Body of pancreas (tissue), 4 donors: ENCODE measurements at regions of chr9 and their contacts with region 1.

Region 1: DNA sequence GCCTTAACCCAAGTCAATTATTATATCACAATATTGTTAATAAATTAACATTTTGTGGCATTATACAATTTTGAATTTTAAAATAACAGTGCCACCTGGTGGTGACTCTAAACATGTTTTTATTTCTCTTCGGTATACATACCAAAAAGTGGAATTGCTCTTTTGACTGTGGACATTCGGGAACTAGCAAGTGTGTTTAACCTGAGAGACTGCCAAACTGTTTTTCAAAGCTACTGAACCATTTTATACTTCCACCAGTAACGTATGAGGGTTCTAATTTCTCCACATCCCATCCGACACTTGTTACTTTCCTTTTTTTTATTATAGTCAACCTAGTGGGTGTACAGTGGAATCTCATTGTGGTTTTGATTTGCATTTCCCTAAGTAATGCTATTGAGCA is 18.3 kb upstream of the HSDL2 start:
- DNase-seq: no peak
- ATAC-seq: peak; percentile 62
- H3K4me3 ChIP-seq: no peak overlapping the region
- H3K27ac ChIP-seq: no peak overlapping the region
- H3K4me1 ChIP-seq: peaks cover 4% of the 10 kb centered on the region
- H3K27me3 ChIP-seq: no peaks in the 10 kb centered on the region
- CTCF ChIP-seq: peak; percentile 19 to 67 (median 58)
- POLR2A ChIP-seq: no peak

Region 2: GRCh38 chr9:112112941-112113681 is 248.5 kb before region 1 on chr9:
- intact Hi-C with region 1: loop called (anchors 5 kb)
- DNase-seq: peak; percentile 47 to 67 (median 58)
- ATAC-seq: peak; percentile 82
- H3K4me3 ChIP-seq: no peak overlapping the region
- H3K27ac ChIP-seq: no peak overlapping the region
- H3K4me1 ChIP-seq: no peaks in the 10 kb centered on the region
- H3K27me3 ChIP-seq: no peaks in the 10 kb centered on the region
- CTCF ChIP-seq: peak; percentile 37 to 86 (median 78)
- POLR2A ChIP-seq: no peak